ENCODE measurements at regions of chr1 and their contacts with region 1.

Region 1: DNA sequence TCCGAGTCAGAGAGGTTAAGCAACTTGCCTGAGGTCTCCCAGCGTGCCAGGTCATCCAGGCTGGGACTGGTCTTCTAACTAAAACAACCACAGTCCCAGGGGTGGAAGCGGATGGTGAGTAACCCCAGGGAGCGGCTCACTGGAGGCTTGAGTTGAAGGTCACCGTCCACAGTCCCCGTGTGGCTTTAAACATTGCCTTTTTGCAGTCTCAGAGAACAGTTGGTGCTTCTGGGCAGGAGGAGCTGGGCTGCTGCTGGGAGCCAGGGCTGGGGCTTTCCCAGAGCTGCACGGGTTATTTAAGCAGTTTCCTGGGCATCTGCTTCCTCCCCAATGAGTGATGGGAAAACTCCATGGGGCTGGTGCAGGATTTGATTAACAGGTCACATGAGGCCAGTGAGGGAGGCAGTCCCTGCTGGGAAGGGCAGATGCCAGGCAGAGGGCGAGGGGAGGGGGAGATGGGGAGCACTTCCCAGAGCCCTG is 12.3 kb downstream of the ARHGEF10L start:
- DNase-seq: no peak
- ATAC-seq: no peak
- H3K4me3 ChIP-seq: no peak overlapping the region
- H3K4me3 Mint-ChIP-seq: no peak overlapping the region
- H3K27ac ChIP-seq: no peak overlapping the region
- H3K27ac Mint-ChIP-seq: no peak overlapping the region
- H3K4me1 ChIP-seq: no peaks in the 10 kb centered on the region
- H3K4me1 Mint-ChIP-seq: no peaks in the 10 kb centered on the region
- H3K27me3 ChIP-seq: peaks cover 0 to 4% (median 0%) of the 10 kb centered on the region in 4 experiments
- H3K27me3 Mint-ChIP-seq: peaks cover 31% of the 10 kb centered on the region
- CTCF ChIP-seq: no peak

Region 2: GRCh38 chr1:16146279-16147155 is 1405.3 kb before region 1 on chr1:
- CTCF ChIA-PET with region 1: no interaction called
- POLR2A ChIA-PET with region 1: no interaction called
- intact Hi-C with region 1: no loop called
- DNase-seq: no peak
- ATAC-seq: no peak
- H3K4me3 ChIP-seq: no peak overlapping the region
- H3K4me3 Mint-ChIP-seq: no peak overlapping the region
- H3K27ac ChIP-seq: no peak overlapping the region
- H3K27ac Mint-ChIP-seq: no peak overlapping the region
- H3K4me1 ChIP-seq: no peaks in the 10 kb centered on the region
- H3K4me1 Mint-ChIP-seq: no peaks in the 10 kb centered on the region
- H3K27me3 ChIP-seq: peaks cover 0 to 48% (median 4%) of the 10 kb centered on the region in 4 experiments
- H3K27me3 Mint-ChIP-seq: peaks cover 32% of the 10 kb centered on the region
- CTCF ChIP-seq: no peak

Region 3: GRCh38 chr1:17510138-17510537 is 41.7 kb before region 1 on chr1:
- CTCF ChIA-PET with region 1: no interaction called
- POLR2A ChIA-PET with region 1: interaction called, 10 read pairs
- intact Hi-C with region 1: no loop called
- DNase-seq: no peak
- ATAC-seq: no peak
- H3K4me3 ChIP-seq: no peak overlapping the region
- H3K4me3 Mint-ChIP-seq: no peak overlapping the region
- H3K27ac ChIP-seq: no peak overlapping the region
- H3K27ac Mint-ChIP-seq: no peak overlapping the region
- H3K4me1 ChIP-seq: no peaks in the 10 kb centered on the region
- H3K4me1 Mint-ChIP-seq: no peaks in the 10 kb centered on the region
- H3K27me3 ChIP-seq: no peaks in the 10 kb centered on the region
- H3K27me3 Mint-ChIP-seq: peaks cover 9% of the 10 kb centered on the region
- CTCF ChIP-seq: no peak

Region 4: DNA sequence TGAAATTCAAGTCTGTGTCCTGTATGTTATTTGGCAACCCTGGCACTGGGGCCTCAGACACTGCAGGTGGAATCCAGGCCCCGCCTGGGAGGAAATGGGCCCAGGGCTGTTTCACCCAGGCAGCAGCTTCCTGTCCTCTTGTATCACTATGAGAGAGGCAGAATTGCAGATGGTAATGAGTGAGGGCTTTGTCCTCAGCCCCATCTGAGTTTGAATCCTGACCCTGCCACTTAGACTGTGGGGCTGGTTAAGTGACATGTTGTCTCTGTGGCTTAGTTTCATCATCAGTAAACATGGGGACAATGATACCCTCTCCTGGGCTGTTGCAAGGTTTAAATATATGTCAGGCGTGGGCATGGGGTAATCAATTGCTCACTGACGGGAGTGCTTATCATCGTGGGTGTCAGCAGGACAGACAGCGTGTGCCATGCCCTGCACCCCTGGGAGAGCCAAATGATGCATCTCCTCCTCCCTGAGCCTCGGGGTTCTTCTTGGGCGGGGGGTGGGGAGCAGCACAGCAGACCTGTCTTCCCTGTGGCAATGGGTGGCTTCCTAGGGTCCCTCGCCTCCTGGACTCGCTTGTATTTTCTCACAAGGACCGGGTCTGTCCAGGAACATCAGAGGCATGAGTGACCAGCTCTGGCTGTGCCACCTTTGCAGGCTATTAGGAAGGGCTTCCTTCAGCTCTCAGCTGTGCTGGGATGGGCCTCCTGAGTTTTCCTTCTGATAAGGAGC is 29.8 kb after region 1 on chr1:
- CTCF ChIA-PET with region 1: no interaction called
- POLR2A ChIA-PET with region 1: no interaction called
- intact Hi-C with region 1: no loop called
- DNase-seq: no peak
- ATAC-seq: no peak
- H3K4me3 ChIP-seq: no peak overlapping the region
- H3K4me3 Mint-ChIP-seq: no peak overlapping the region
- H3K27ac ChIP-seq: no peak overlapping the region
- H3K27ac Mint-ChIP-seq: no peak overlapping the region
- H3K4me1 ChIP-seq: no peaks in the 10 kb centered on the region
- H3K4me1 Mint-ChIP-seq: no peaks in the 10 kb centered on the region
- H3K27me3 ChIP-seq: no peaks in the 10 kb centered on the region
- H3K27me3 Mint-ChIP-seq: peaks cover 19% of the 10 kb centered on the region
- CTCF ChIP-seq: no peak